Right cardiac atrium (tissue), 5 donors: ENCODE measurements at regions of chr15 and their contacts with region 1.

Region 1: DNA sequence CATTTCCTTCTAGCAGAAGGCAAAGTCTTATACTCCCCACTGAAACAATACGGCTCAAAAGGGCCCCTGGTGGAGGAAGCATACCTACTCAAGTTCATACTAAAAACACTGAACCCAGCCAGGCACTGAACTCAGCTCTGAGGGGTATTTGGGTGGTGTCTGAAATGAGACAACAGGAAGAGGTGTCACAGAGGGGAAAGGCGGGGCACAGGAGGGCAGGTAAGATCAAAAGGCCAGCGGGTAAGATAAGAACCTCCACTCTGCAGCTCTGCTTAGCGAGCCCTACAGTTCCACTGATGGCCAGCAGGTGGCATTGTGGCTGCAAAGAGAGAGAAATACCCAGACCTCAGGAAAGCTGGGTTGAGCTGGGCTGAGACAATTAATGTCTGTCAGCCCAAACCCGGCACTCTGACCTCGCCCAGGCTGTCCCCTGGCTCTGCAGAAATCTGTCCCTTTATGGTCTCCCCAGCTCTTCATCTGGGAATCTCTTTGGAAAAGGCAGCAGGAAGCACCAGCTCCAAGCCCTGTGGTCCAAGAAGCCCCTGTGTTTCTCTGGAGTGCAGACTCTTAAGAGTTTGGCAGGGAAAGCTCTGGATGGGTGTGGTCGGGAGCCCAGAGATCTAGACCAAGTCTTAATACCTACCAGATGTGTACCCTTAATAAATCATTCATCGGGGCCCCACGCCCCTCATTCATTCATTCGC is 8.4 kb downstream of the MFGE8 start:
- DNase-seq: peak; percentile 79 to 94 (median 91)
- ATAC-seq: peak; percentile 72 to 78
- H3K4me3 ChIP-seq: no peak overlapping the region
- H3K27ac ChIP-seq: no peak overlapping the region
- H3K4me1 ChIP-seq: peaks cover 9% of the 10 kb centered on the region
- H3K27me3 ChIP-seq: no peaks in the 10 kb centered on the region

Region 2: GRCh38 chr15:88674661-88675060 is 230.1 kb before region 1 on chr15:
- intact Hi-C with region 1: no loop called
- DNase-seq: no peak
- ATAC-seq: no peak
- H3K4me3 ChIP-seq: no peak overlapping the region
- H3K27ac ChIP-seq: no peak overlapping the region
- H3K4me1 ChIP-seq: no peaks in the 10 kb centered on the region
- H3K27me3 ChIP-seq: no peaks in the 10 kb centered on the region

Region 3: DNA sequence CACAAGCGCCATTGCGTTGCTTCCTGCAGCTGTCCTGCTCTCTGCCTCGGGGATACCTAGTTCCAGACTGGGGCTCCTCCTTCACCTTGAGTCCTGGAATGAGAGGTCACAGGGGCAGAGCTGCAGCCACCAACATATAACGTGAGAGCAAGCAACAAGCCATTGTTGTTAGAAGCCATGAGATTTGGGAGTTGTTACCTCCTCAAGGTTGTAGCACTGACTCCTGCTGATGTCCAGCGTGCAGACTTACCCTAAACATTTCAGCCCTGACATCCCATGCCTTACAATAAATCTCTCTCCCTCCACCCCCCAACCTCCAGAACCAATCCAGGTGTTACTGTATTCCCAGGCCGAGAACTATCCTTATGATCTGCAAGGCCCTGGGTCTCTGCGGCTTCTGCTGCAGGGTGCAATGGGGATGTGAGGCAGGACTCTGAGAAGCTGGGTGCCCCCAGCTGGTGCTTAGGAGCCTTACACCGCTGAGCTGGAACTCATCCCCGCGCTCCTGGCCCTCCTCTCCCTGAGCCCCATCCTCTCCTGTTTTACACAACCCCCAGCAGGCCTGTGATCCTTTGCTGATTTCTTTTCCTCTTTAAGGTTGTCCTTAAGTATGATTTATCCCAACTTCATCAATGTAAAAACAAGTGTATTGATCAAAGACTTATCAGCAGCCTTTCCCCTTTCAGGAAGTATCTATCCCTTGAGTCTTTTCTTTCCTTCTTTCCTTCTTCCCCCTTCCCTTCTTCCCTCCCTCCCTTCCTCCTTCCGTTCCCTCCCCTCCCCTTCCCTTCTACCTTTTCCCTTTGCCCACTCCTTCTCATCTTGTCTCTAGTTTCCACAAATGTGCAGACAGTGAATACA is 99.3 kb after region 1 on chr15:
- intact Hi-C with region 1: loop called in 3 of 4 experiments (anchors 5 kb)
- DNase-seq: peak; percentile 35 to 71 (median 66)
- ATAC-seq: peak; percentile 72 to 85
- H3K4me3 ChIP-seq: no peak overlapping the region
- H3K27ac ChIP-seq: no peak overlapping the region
- H3K4me1 ChIP-seq: no peaks in the 10 kb centered on the region
- H3K27me3 ChIP-seq: no peaks in the 10 kb centered on the region

Region 4: DNA sequence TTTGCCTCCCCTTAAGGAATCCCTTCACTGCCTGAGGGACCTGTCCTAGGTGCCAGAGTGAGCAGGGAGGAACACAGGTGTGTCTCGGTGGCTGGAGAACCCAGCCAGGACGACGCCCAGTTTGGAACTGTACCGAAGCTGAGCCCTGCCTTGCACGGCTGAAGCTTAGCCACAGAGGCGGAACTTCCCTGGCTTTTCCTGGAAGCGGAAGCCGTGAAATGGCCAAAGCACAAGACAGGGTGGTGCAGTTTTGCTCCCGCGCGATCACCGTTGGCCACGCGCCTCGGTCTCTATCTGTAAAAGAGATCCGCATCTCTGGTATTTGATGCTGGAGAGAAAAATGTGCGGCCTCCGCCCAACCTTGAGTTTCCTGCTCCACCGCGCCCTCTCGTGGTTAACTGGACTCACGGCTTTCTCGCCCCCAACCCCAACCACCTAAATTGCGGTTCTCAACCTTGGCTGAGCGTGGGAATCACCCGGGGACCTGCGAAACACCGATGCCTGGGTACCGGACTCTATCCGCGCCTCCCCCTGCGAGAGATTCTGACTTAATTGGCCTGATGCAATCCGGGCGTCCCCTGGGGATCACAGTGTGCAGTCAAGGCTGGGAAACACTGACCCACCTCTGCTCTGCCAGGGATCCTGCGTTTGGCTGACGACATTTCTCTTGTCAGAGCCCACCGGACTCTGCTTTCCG is 112.7 kb after region 1 on chr15:
- intact Hi-C with region 1: loop called in 2 of 4 experiments (anchors 5 kb)
- DNase-seq: peak; percentile 86 to 91 (median 87)
- ATAC-seq: peak; percentile 68 to 80
- H3K4me3 ChIP-seq: peak overlapping the region; percentile 33
- H3K27ac ChIP-seq: peak overlapping the region; percentile 60
- H3K4me1 ChIP-seq: peaks cover 4% of the 10 kb centered on the region
- H3K27me3 ChIP-seq: no peaks in the 10 kb centered on the region

Region 5: DNA sequence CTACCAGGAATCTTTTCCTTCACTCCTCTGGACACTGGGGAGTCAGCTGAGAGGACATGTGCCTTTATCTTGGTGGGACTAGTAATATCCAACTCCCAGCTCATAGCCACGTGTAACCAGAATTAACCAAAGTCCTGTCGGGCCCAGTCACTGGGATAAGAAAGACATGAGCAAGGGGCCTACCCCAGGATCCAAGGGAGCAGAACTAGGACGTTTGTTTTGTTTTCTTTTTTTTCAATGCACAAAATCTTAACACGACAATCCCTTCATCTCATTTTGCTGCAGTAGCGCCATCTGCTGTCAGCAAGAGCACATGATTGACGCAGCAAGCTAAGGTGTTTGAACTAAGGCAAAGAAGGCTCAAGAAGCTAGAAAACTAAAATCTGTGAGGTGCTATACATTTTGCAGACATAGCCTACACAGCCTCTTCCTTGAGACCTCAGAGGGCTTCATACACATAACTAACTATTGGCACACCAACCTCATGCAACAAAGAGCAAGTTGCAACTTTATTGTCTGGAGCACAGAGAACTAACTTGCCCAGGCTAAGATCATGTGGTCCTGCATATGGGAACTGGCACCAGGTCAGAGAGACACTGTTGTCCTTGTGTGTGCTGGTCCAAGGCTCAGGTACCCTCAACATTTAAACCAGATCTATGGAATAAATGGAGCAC is 273.0 kb after region 1 on chr15:
- intact Hi-C with region 1: loop called in 3 of 4 experiments (anchors 5 to 10 kb)
- DNase-seq: peak; percentile 56 to 78 (median 66)
- ATAC-seq: peak; percentile 28 to 34
- H3K4me3 ChIP-seq: no peak overlapping the region
- H3K27ac ChIP-seq: peak overlapping the region; percentile 3
- H3K4me1 ChIP-seq: peaks cover 8% of the 10 kb centered on the region
- H3K27me3 ChIP-seq: no peaks in the 10 kb centered on the region